ENCODE measurements at regions of chr2 and their contacts with region 1.

Region 1: GRCh38 chr2:60337140-60337494 is 216.3 kb downstream of the BCL11A start:
- DNase-seq: no peak
- H3K4me3 ChIP-seq: no peak overlapping the region
- H3K27ac ChIP-seq: no peak overlapping the region
- H3K4me1 ChIP-seq: no peaks in the 10 kb centered on the region
- H3K27me3 ChIP-seq: no peaks in the 10 kb centered on the region
- CTCF ChIP-seq: no peak
- POLR2A ChIP-seq: no peak

Region 2: DNA sequence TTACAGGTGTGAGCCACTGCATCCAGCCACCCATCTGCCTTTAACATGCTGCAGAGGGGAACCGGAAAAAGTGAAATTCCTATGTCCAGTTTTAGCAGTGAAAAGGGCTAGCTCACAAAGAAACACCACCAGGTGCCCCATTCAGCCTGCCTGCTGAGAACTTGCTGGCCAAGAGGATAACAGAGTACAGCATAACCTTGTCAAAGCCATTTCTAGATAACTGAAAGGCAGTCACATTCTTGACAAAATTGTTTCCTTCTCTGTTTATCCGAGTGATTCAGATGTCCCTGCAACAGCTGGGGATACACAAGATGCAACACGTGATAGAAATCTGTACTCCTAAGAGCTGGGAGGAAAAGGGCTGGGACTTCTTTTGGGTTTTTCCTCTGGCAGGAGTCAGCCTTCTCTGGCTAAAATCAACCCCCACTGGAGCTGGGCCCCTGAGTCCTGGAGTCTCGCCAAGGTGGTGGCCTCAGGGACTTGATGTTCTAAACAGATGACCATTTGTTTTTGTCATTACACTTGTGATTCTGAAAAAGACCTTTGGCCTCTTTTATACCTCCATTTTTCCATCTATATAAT is 289.1 kb before region 1 on chr2:
- intact Hi-C with region 1: no loop called
- DNase-seq: no peak
- H3K4me3 ChIP-seq: no peak overlapping the region
- H3K27ac ChIP-seq: no peak overlapping the region
- H3K4me1 ChIP-seq: no peaks in the 10 kb centered on the region
- H3K27me3 ChIP-seq: no peaks in the 10 kb centered on the region
- CTCF ChIP-seq: no peak
- POLR2A ChIP-seq: no peak

Region 3: GRCh38 chr2:60230037-60230436 is 107.1 kb before region 1 on chr2:
- intact Hi-C with region 1: no loop called
- DNase-seq: no peak
- H3K4me3 ChIP-seq: no peak overlapping the region
- H3K27ac ChIP-seq: no peak overlapping the region
- H3K4me1 ChIP-seq: no peaks in the 10 kb centered on the region
- H3K27me3 ChIP-seq: no peaks in the 10 kb centered on the region
- CTCF ChIP-seq: no peak
- POLR2A ChIP-seq: no peak

Region 4: DNA sequence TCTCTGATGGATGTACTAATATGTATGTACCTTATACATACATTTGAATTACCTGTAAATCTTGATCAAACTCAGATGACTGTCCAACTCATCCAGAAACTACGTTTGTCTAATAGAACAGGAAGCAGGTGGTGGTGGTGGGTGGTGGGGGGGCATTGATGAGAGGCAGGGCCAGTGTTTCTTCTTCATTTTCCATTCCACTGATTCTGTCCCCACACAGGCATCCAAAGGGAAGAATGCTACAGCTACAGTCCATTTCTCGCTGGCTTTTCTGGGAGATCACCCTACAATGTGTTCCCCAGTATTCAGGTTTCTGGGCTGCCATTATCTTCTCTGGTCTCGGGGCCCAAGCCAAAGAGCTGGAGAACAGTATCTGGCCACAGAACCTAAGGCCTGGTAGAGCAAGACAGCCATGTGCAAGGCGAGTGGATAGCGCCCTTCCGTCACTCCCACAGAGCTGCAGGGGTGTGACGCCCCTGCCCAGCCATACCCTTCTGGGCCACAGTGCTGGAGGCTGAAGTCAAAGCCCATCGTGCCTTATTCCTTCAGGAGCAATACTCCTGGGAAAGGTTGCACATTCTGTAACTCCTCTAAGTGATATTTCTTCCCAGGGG is 161.8 kb after region 1 on chr2:
- intact Hi-C with region 1: loop called (anchors 10 kb)
- DNase-seq: no peak
- H3K4me3 ChIP-seq: no peak overlapping the region
- H3K27ac ChIP-seq: no peak overlapping the region
- H3K4me1 ChIP-seq: no peaks in the 10 kb centered on the region
- H3K27me3 ChIP-seq: no peaks in the 10 kb centered on the region
- CTCF ChIP-seq: no peak
- POLR2A ChIP-seq: no peak